Mucosa of descending colon (tissue), 3 donors: ENCODE measurements at regions of chr2 and their contacts with region 1.

Region 1: DNA sequence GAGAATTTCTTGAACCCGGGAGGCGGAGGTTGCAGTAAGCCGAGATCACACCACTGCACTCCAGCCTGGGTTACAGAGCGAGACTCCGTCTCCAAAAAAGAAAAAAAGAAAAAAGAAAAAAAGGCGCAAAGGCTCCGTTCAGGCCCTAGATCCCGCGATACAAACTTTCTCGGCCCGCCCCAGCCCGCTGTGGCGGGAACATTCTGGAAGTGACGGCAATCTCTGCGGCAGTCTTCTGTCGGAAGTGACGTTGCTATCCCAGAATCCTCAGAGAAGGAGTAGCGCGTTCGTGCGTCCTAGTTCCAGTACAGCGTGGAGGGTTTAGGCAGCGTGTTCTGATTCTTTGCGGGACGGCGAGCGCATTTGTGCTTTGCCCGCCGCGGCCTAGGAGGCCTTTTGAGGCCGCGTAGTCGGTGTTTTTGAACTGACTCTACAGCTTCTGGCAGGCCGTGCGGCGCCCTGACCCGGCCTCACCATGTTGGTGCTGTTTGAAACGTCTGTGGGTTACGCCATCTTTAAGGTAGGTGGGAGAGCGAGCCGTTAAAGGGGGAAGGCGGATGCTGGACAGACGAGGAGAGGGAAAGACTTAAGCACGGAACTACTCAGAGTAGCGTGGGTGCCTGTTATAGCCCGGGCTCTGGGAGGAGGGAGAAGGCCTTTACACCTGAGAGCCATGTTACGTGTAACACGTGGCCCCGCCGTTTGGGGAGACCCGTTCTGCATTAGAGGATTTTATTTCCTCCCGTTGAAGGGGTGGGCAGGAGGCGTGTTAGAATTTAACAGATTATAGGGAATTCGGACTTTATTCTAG is at the start of gene NOP58:
- DNase-seq: peak; percentile 92 to 96 (median 93)
- ATAC-seq: peak; percentile 97
- H3K4me3 ChIP-seq: peak within 1 kb of the TSS; percentile 66
- H3K4me1 ChIP-seq: peaks cover 24% of the 10 kb centered on the region
- CTCF ChIP-seq: no peak
- total RNA-seq, gene NOP58: 34.3 to 43.2 (median 38.5) TPM

Region 2: DNA sequence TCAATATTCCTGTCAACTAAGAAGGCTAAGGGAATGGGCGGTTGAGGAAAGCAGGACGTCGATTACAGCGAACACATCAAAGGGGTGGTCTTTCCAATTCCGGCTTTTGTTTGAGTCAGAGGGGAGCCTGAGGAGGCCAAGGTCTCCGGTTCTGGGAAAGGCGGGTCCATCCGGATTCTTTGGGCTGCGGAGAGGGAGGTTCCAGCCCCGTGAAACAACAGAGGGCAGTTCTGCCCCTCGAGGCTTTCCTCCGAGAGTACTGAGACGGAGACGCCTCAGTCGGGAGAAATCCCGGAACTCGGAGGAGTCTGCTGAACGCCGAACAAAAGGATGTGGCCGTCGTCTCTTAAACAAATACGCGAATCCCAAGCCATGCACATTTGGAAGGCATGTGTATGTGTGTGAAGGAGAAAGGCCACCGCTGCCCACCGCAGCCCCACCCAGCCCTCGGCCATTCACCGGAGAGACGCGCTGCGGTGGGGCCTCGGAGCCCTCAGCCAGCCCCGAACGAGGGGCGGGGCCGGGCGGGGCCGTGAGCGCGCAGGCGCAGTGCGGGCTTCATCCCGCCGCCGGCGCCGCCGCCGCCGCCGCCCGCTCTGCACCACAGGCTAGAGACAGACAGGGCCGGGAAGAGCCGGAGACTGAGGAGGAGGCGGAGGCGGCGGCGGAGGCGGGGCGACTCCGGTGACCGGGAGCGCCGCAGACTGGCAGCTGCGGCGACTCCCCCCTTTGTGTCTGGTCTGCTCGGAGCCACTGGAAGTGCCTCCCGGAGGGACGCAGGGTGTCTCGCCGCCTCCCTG is 110.1 kb after region 1 on chr2 and contains the start of gene BMPR2:
- intact Hi-C with region 1: loop called in 1 of 2 experiments (anchors 10 kb)
- DNase-seq: peak; percentile 90 to 94 (median 91)
- ATAC-seq: peak; percentile 91
- H3K4me3 ChIP-seq: peak within 1 kb of the TSS; percentile 86
- H3K4me1 ChIP-seq: peaks cover 10% of the 10 kb centered on the region
- CTCF ChIP-seq: no peak
- total RNA-seq, gene BMPR2: 33.9 to 54.5 (median 38.7) TPM